Mammary epithelial cell (primary cell): ENCODE measurements at regions of chr5 and their contacts with region 1.

Region 1: DNA sequence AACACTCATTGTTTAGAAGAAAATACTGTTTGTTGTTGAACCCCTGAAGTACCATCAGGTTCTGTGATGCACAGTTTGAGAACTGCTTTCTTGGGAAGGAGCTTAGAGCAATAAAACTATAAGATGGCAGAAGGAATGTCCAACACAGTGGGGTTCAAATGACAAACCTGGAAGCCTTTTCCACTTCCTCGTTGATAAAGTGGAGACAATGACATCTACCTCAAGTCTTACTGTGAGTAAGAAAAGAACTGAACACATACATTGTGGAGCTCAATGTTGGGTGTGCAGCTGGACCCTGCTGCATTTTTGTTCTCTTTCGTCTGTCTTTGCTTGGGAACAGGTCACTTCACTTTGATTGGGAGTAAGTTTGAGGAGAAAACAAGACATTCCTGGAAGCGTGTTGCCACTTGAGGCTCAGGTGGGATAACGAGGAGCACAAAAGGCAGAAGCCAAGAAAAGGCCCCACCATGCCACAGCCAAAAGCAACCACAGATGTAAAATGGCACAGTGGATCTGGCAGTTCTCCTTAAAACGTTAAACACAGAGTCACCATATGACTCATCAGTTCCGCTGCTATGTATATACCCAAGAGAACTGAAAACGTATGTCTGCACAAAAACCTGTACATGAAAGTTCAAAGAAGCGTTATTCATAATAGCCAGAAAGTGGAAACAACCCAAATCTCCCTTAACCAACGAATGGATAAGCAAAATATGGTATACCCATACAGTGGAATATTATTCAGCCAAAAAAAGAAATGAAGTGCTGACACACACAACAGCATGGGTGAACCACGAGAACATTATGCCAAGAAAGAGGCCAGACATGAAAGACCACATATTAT is 42.9 kb upstream of the SUB1 start:
- DNase-seq: no peak
- H3K4me3 ChIP-seq: no peak overlapping the region
- H3K27ac ChIP-seq: no peak overlapping the region
- H3K4me1 ChIP-seq: no peaks in the 10 kb centered on the region
- H3K27me3 ChIP-seq: no peaks in the 10 kb centered on the region
- CTCF ChIP-seq: no peak

Region 2: DNA sequence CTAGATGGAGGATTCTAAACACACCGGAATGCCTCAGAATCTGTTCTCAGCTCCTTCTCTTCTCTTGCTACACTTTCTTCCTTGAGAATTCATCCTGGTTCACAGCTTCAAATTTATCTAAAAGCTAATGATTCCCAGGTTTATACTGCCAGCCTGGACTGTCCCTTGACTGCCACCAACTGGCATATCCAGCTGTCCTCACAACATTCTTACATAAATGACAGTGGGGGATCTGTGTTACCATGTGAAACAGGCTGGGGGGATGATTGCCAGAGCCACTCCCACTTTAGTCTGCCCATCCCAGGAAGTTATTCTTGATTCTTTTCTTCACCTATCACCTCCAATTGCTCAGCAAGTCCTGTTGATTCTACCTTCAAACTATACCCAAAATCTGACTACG is 70.7 kb before region 1 on chr5:
- CTCF ChIA-PET with region 1: no interaction called
- dilution Hi-C with region 1: loop called (anchors 5 kb)
- in situ Hi-C with region 1: no loop called
- intact Hi-C with region 1: no loop called
- DNase-seq: no peak
- H3K4me3 ChIP-seq: no peak overlapping the region
- H3K27ac ChIP-seq: no peak overlapping the region
- H3K4me1 ChIP-seq: no peaks in the 10 kb centered on the region
- H3K27me3 ChIP-seq: no peaks in the 10 kb centered on the region
- CTCF ChIP-seq: no peak